HepG2 (cell line): ENCODE measurements at regions of chr2 and their contacts with region 1.

Region 1: DNA sequence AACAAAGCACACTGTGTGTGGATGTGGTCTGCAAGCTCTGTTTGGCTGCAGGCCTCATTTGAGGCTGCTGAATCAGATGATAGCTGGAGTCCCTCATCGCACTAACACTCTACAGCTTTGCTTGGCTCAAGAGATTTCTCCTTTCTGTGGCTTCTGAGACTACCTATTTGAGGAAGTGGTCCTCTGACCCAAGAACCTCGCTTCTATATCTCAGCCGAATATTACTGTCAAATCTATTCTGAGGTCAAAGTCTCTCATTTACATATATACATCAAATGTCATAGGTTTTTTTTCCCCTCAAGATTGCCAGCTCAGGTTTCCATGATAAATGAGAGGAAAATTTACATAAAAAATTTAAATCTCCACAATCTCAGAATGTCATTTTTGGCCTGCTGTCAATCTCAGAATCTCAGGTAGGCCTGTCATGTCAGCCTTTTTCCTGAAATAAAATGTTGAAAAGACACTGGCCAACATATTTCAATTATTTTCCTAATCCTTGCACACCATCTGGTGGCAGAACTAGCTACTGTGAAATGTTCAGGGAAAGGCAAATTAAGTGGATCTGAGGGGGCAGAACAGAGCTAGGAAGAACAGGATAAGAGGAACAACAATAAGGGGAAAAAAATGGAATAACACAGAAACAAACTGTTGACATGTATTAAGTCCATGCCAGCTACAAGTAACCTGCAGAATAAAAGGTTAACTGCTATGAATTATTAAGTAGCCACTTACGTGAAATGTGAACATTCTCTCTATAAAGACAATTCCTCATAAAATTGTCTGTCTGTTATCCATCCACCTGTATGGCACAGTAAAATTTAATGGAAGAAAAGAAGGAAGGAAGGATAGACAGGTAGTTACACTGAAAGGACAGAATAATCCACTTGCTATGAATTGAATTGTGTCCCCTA is 39.3 kb downstream of the AP1S3 start:
- DNase-seq: peak; percentile 59
- ATAC-seq: peak; percentile 87
- H3K4me3 ChIP-seq: no peak overlapping the region
- H3K27ac ChIP-seq: no peak overlapping the region
- H3K4me1 ChIP-seq: peaks cover 11% of the 10 kb centered on the region; the same call in 1 of the 2 replicates
- H3K27me3 ChIP-seq: no peaks in the 10 kb centered on the region
- CTCF ChIP-seq: peak; percentile 77
- EP300 ChIP-seq: no peak
- POLR2A ChIP-seq: no peak
- RAD21 ChIP-seq: peak; percentile 75

Region 2: DNA sequence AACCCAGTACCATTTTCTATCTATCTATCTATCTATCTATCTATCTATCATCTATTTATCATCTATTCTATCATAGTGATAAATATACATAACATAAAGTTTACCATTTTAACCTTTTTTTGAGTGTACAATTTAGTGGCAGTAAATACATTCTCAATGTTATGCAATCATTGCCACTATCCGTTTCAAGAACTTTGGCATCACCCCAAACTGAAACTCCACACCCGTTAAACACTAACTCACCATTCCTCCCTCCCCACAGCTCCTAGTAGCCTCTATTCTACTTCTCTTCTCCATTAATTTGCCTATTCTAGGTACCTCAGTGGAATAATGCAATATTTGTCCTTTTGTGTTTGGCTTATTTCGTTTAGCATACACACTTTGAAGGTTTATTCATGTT is 828.6 kb before region 1 on chr2:
- CTCF ChIA-PET with region 1: interaction called, 4 read pairs
- POLR2A ChIA-PET with region 1: no interaction called
- in situ Hi-C with region 1: loop called (anchors 25 kb)
- intact Hi-C with region 1: loop called (anchors 2 kb)
- DNase-seq: no peak
- ATAC-seq: no peak
- H3K4me3 ChIP-seq: no peak overlapping the region
- H3K27ac ChIP-seq: no peak overlapping the region
- H3K4me1 ChIP-seq: peaks cover 24% of the 10 kb centered on the region; the same call in 1 of the 2 replicates
- H3K27me3 ChIP-seq: peaks cover 1 to 53% of the 10 kb centered on the region in 2 experiments; a peak in 4 of 5 replicates
- CTCF ChIP-seq: no peak
- EP300 ChIP-seq: no peak
- POLR2A ChIP-seq: no peak
- RAD21 ChIP-seq: no peak

Region 3: DNA sequence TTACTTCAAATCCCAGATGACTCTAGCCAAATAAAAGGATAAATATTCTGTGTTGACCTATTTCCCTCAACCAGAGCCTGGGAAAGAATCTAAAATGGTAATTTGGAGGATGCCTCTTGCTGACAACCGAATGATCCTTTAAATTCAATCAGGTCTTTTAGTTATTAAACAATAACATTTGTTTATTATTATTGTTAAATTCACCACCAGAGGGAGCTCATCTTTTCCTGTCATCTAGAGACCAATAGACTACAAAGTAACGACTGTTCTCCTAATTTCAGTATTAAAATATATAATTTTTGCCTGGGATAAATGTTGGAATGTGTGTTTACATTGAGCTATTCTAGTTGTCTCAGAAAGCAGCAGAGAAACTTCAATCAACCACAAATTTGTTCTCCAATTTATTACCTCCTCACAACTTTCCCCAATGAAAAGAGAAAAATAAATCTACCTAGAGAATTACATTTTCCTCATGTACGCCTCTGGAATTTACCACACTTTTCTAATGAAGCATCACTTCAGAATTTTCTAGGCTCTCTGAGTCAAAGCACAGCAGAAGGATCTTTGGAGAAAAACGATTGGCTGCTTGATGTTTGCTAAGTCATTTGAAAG is 338.6 kb before region 1 on chr2:
- CTCF ChIA-PET with region 1: no interaction called
- POLR2A ChIA-PET with region 1: no interaction called
- in situ Hi-C with region 1: loop called (anchors 10 kb)
- intact Hi-C with region 1: no loop called
- DNase-seq: no peak
- ATAC-seq: no peak
- H3K4me3 ChIP-seq: no peak overlapping the region
- H3K27ac ChIP-seq: no peak overlapping the region
- H3K4me1 ChIP-seq: no peaks in the 10 kb centered on the region
- H3K27me3 ChIP-seq: no peaks in the 10 kb centered on the region
- CTCF ChIP-seq: no peak
- EP300 ChIP-seq: no peak
- POLR2A ChIP-seq: no peak
- RAD21 ChIP-seq: no peak

Region 4: DNA sequence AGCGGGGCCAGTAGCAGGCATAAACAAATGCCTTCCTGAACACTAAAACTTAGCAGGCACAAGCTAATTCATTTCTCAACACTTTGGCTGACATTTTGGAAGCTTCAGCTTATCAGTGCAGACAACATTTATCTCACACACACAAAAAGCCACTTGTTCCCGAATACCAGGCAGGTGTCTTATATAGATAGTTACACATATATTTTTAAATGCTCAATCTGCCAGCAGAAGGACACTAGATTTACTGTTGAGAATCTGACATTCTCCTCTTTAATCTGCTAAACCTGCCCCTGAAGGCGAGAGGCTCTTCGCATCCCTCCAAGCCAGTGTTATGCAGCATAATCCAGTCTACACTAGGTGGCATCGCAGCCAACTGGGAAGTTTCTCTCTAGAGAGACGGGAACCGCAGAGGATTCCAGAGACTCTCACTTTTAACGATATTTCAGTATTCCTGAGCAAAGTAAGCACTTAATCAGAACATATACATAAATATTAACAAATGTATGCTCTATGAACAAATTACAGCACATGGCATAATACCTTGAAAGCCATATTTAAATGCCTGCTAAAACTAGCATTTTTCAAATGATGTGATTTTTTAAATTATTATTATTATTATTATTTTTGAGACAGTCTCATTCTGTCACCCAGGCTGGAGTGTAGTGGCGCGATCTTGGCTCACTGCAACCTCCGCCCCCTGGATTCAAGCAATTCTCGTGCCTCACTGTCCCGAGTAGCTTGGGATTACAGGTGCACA is 105.7 kb before region 1 on chr2:
- CTCF ChIA-PET with region 1: interaction called, 22 read pairs
- POLR2A ChIA-PET with region 1: no interaction called
- in situ Hi-C with region 1: loop called (anchors 10 kb)
- intact Hi-C with region 1: loop called (anchors 1 kb)
- DNase-seq: peak; percentile 54
- ATAC-seq: peak; percentile 95
- H3K4me3 ChIP-seq: no peak overlapping the region
- H3K27ac ChIP-seq: no peak overlapping the region
- H3K4me1 ChIP-seq: peaks cover 16% of the 10 kb centered on the region; the same call in 1 of the 2 replicates
- H3K27me3 ChIP-seq: peaks cover 0 to 6% of the 10 kb centered on the region in 2 experiments; a peak in 2 of 5 replicates
- CTCF ChIP-seq: peak; percentile 85
- EP300 ChIP-seq: no peak
- POLR2A ChIP-seq: no peak
- RAD21 ChIP-seq: peak; percentile 61; the same call in 1 of the 2 replicates